PC-9 (cell line): ENCODE measurements at regions of chr2 and their contacts with region 1.

Region 1: GRCh38 chr2:220891405-220891804 is 680.7 kb downstream of the EPHA4 start:
- DNase-seq: peak; percentile 3 to 64
- H3K4me3 ChIP-seq: no peak overlapping the region
- H3K27ac ChIP-seq: no peak overlapping the region
- H3K4me1 ChIP-seq: no peaks in the 10 kb centered on the region
- H3K27me3 ChIP-seq: no peaks in the 10 kb centered on the region
- CTCF ChIP-seq: no peak

Region 2: DNA sequence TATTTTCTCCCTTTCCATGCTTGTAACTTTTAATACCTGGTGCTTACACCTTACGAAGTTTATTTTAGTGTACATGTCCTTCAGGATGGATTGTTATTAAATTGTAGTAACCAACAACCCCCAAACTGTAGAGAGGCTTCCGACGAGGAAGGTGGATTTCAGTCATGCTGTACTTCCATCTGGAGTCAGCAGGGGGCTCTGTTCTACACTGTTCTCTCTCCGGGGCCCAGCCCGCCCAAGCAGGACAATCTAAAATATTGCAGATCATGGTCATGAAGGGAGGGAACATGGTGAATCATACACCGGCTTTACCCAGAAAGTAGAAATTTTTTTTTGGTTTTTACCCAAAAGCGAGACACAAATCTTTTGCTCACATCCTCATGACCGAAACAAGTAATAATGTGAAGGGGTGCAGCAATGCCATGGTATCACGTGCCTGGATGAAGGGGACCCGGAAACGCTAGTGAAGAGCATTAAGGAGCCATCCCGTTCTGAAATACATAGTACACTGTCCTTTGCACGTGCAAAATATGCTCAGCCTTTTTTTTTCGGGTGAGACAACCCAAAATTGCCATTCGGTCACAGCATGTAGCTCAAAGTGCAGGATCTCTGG is 204.1 kb before region 1 on chr2:
- CTCF ChIA-PET with region 1: no interaction called
- POLR2A ChIA-PET with region 1: no interaction called
- intact Hi-C with region 1: loop called (anchors 10 kb)
- DNase-seq: peak in 1 of 2 experiments; percentile 47
- H3K4me3 ChIP-seq: no peak overlapping the region
- H3K27ac ChIP-seq: no peak overlapping the region
- H3K4me1 ChIP-seq: peaks cover 9% of the 10 kb centered on the region; the same call in 1 of the 2 replicates
- H3K27me3 ChIP-seq: no peaks in the 10 kb centered on the region
- CTCF ChIP-seq: peak; percentile 84

Region 3: DNA sequence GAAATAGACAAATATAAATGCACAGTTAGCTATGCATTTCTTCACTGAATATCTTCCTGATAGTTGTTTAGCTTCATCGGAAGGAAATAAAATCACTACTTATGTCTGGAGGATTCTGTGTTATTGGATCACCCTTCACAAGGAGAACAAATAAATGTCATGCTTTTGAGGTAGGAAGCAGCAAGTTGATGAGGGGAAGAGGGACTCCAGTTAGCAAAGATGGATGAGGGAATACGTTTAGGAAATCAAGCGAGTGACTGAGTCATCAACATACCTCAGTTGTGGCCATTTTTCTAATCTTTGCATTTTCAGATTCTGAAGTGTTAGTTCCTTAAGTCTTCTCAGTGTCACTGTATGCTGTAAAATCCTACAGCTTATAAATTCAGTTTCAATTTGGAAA is 224.5 kb after region 1 on chr2:
- CTCF ChIA-PET with region 1: no interaction called
- POLR2A ChIA-PET with region 1: interaction called, 45 read pairs
- intact Hi-C with region 1: no loop called
- DNase-seq: no peak
- H3K4me3 ChIP-seq: no peak overlapping the region
- H3K27ac ChIP-seq: no peak overlapping the region
- H3K4me1 ChIP-seq: no peaks in the 10 kb centered on the region
- H3K27me3 ChIP-seq: no peaks in the 10 kb centered on the region
- CTCF ChIP-seq: no peak